ENCODE measurements at regions of chr4 and their contacts with region 1.

Region 1: GRCh38 chr4:152735396-152735859 is 44.1 kb downstream of the TIGD4 start:
- DNase-seq: no peak
- H3K4me3 ChIP-seq: no peak overlapping the region
- H3K27ac ChIP-seq: no peak overlapping the region
- H3K4me1 ChIP-seq: peaks cover 0 to 4% (median 2%) of the 10 kb centered on the region in 4 experiments; a peak in 3 of 7 replicates
- H3K27me3 ChIP-seq: no peaks in the 10 kb centered on the region
- CTCF ChIP-seq: peak in 2 of 3 experiments; percentile 11 to 53; a peak in 2 of 4 replicates
- EP300 ChIP-seq: no peak
- POLR2A ChIP-seq: no peak
- RAD21 ChIP-seq: peak; percentile 71 to 76

Region 2: GRCh38 chr4:152646221-152646620 is 89.2 kb before region 1 on chr4:
- CTCF ChIA-PET with region 1: interaction called, 10 read pairs
- POLR2A ChIA-PET with region 1: no interaction called
- DNase-seq: no peak
- H3K4me3 ChIP-seq: no peak overlapping the region
- H3K27ac ChIP-seq: no peak overlapping the region
- H3K4me1 ChIP-seq: peaks cover 0 to 8% (median 4%) of the 10 kb centered on the region in 4 experiments; a peak in 4 of 7 replicates
- H3K27me3 ChIP-seq: no peaks in the 10 kb centered on the region; a peak in 1 of 7 replicates
- CTCF ChIP-seq: no peak
- EP300 ChIP-seq: no peak
- POLR2A ChIP-seq: no peak
- RAD21 ChIP-seq: no peak

Region 3: GRCh38 chr4:152719801-152720556 is 15.4 kb before region 1 on chr4:
- CTCF ChIA-PET with region 1: interaction called, 11 read pairs
- POLR2A ChIA-PET with region 1: no interaction called
- DNase-seq: no peak
- H3K4me3 ChIP-seq: no peak overlapping the region
- H3K27ac ChIP-seq: no peak overlapping the region
- H3K4me1 ChIP-seq: peaks cover 0 to 9% (median 1%) of the 10 kb centered on the region in 4 experiments; a peak in 2 of 7 replicates
- H3K27me3 ChIP-seq: no peaks in the 10 kb centered on the region
- CTCF ChIP-seq: no peak
- EP300 ChIP-seq: no peak
- POLR2A ChIP-seq: no peak
- RAD21 ChIP-seq: no peak

Measured in H1 (cell line).